ENCODE measurements at regions of chr2 and their contacts with region 1.

Region 1: GRCh38 chr2:68774569-68775271 is 40.1 kb downstream of the ARHGAP25 start:
- DNase-seq: peak; percentile 66
- H3K4me3 Mint-ChIP-seq: peak overlapping the region; percentile 81
- H3K27ac Mint-ChIP-seq: peak overlapping the region; percentile 91
- H3K4me1 Mint-ChIP-seq: peaks cover 89% of the 10 kb centered on the region
- H3K27me3 Mint-ChIP-seq: no peaks in the 10 kb centered on the region

Region 2: GRCh38 chr2:68751397-68752339 is 23.1 kb before region 1 on chr2:
- intact Hi-C with region 1: loop called (anchors 1 kb)
- DNase-seq: peak; percentile 78
- H3K4me3 Mint-ChIP-seq: peak overlapping the region; percentile 38
- H3K27ac Mint-ChIP-seq: peak overlapping the region; percentile 84
- H3K4me1 Mint-ChIP-seq: peaks cover 91% of the 10 kb centered on the region
- H3K27me3 Mint-ChIP-seq: no peaks in the 10 kb centered on the region

Region 3: DNA sequence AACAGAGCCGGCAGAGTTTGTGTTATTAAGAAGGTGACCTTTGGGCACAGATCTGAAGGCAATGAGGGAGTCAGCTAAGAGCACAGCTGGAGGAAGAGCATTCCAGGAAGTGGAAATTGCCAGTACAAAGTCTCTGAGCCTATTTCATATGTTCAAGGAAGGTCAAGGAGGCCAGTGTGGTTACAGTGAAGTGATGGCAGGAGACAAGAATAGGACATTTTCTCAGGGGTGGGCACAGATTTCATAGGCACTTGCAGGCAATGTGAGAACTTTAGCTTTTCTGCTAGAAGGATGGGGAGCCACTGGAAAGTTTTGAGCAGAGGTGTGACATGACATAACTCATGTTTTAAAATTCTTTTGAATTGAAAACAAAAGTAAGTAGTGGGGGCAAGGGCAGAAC is 10.2 kb after region 1 on chr2:
- intact Hi-C with region 1: loop called (anchors 1 kb)
- DNase-seq: no peak
- H3K4me3 Mint-ChIP-seq: no peak overlapping the region
- H3K27ac Mint-ChIP-seq: no peak overlapping the region
- H3K4me1 Mint-ChIP-seq: peaks cover 21% of the 10 kb centered on the region
- H3K27me3 Mint-ChIP-seq: no peaks in the 10 kb centered on the region

Region 4: GRCh38 chr2:68971591-68972231 is 197.0 kb after region 1 on chr2:
- intact Hi-C with region 1: no loop called
- DNase-seq: no peak
- H3K4me3 Mint-ChIP-seq: no peak overlapping the region
- H3K27ac Mint-ChIP-seq: no peak overlapping the region
- H3K4me1 Mint-ChIP-seq: no peaks in the 10 kb centered on the region
- H3K27me3 Mint-ChIP-seq: peaks cover 16% of the 10 kb centered on the region

Measured in activated T-helper 1 cell treated with anti-CD3 and anti-CD28 coated beads, Interleukin-12 subunit alpha, Interleukin-12 subunit beta, Interleukin-2, Interleukin-4 antibody, amounts not matched to agents 30 ng/mL and 10 ng/mL and 1 ng/mL, durations not matched to agents 14 hours and 24 hours and 36 hours (primary cell).